B cell (primary cell): ENCODE measurements at regions of chr2 and their contacts with region 1.

Region 1: DNA sequence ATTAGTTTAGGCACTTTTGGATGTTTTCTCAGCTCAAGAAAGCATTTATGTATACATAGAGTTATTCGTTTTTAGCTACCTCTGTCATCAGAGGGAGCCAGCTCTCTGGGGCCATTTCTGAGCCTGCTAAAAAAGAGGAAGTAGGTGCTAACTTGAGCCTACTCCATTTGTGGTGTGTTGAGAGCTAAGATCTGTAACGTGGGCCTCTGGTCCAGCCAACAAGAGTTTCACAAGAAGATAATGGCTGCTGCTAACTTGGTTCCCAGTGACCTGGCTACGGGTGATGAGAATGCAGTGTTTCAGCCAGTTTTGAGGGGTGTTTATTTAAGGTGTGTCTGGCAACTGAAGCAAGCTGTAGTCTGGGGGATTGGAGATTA is 182.5 kb downstream of the PRKCE start:
- DNase-seq: peak; percentile 74
- ATAC-seq: peak; percentile 72
- H3K4me3 ChIP-seq: no peak overlapping the region
- H3K4me3 Mint-ChIP-seq: peak overlapping the region; percentile 44
- H3K27ac ChIP-seq: peak overlapping the region; percentile 43 to 72
- H3K27ac Mint-ChIP-seq: peak overlapping the region; percentile 90
- H3K4me1 ChIP-seq: peaks cover 58 to 60% of the 10 kb centered on the region in 2 donors
- H3K4me1 Mint-ChIP-seq: peaks cover 64% of the 10 kb centered on the region
- H3K27me3 ChIP-seq: no peaks in the 10 kb centered on the region
- H3K27me3 Mint-ChIP-seq: no peaks in the 10 kb centered on the region
- CTCF ChIP-seq: no peak

Region 2: GRCh38 chr2:45786030-45786835 is 47.7 kb before region 1 on chr2:
- CTCF ChIA-PET with region 1: interaction called, 4 read pairs
- POLR2A ChIA-PET with region 1: no interaction called
- intact Hi-C with region 1: loop called (anchors 5 kb)
- DNase-seq: no peak
- ATAC-seq: no peak
- H3K4me3 ChIP-seq: no peak overlapping the region
- H3K4me3 Mint-ChIP-seq: no peak overlapping the region
- H3K27ac ChIP-seq: no peak overlapping the region
- H3K27ac Mint-ChIP-seq: no peak overlapping the region
- H3K4me1 ChIP-seq: peaks cover 28 to 34% of the 10 kb centered on the region in 2 donors
- H3K4me1 Mint-ChIP-seq: peaks cover 60% of the 10 kb centered on the region
- H3K27me3 ChIP-seq: no peaks in the 10 kb centered on the region
- H3K27me3 Mint-ChIP-seq: no peaks in the 10 kb centered on the region
- CTCF ChIP-seq: no peak

Region 3: DNA sequence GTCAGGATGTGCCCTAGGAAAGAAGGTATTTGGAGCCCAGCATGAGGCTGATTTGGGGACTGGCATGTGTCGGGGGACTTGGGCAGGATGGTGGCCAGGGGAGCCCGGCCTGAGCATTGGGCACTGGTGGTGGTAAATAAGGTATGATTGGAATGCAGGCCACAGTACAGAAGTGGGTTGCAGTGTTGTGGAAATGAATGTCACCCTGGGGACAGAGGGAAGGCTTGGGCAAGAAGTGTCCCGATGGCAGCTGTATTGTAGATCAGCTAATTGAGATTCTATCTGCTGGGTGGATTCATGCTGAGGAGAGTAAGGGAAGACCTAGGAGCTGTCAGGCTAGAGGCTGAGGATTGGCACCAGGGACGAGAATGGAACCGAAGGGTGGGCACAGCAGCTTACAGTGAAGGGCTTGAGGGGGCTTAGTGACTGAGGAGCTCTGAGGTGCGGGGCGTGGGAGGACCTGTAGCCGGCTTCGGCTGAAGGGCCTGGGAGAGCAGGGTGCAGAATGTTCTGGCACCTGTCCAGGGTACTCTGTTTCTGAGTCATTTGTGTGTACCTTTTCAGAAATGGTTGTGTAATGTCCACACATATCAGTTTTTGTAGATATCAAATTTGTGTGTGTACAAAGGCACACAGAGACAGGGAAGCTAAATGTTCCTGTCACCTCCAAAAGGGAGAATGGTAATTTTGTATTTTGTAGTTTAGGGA is 12.2 kb before region 1 on chr2:
- CTCF ChIA-PET with region 1: interaction called, 25 read pairs
- POLR2A ChIA-PET with region 1: no interaction called
- intact Hi-C with region 1: no loop called
- DNase-seq: no peak
- ATAC-seq: no peak
- H3K4me3 ChIP-seq: no peak overlapping the region
- H3K4me3 Mint-ChIP-seq: no peak overlapping the region
- H3K27ac ChIP-seq: no peak overlapping the region
- H3K27ac Mint-ChIP-seq: peak overlapping the region; percentile 10
- H3K4me1 ChIP-seq: peaks cover 13 to 26% of the 10 kb centered on the region in 2 donors
- H3K4me1 Mint-ChIP-seq: peaks cover 67% of the 10 kb centered on the region
- H3K27me3 ChIP-seq: no peaks in the 10 kb centered on the region
- H3K27me3 Mint-ChIP-seq: no peaks in the 10 kb centered on the region
- CTCF ChIP-seq: no peak